Mucosa of descending colon (tissue), 3 donors: ENCODE measurements at regions of chr2 and their contacts with region 1.

Region 1: DNA sequence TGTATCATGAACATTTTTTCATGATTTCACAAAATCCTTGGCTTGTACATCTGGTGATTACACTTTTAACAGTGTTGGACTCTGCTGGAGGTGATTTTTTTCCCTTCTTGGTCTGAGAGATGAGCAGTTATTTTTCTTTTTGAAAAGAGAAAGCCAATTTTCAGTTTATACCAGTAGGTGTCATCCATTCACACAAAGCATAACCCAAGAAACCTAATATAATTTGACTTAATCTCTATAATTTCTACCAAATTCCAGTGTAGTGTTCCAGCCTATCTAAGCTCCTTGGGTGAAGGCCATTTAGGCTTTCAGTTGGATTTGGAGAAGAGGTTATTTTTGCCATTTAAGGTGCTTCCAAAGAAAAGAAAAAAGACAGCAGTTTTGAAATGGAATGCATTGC is 7.7 kb upstream of the ICOS start:
- DNase-seq: no peak
- ATAC-seq: no peak
- H3K4me3 ChIP-seq: no peak overlapping the region
- H3K4me1 ChIP-seq: no peaks in the 10 kb centered on the region
- CTCF ChIP-seq: no peak

Region 2: GRCh38 chr2:204177977-204178540 is 249.2 kb after region 1 on chr2:
- intact Hi-C with region 1: loop called in 1 of 2 experiments (anchors 5 kb)
- DNase-seq: peak in 2 of 3 donors; percentile 74 to 86
- ATAC-seq: peak; percentile 64
- H3K4me3 ChIP-seq: no peak overlapping the region
- H3K4me1 ChIP-seq: no peaks in the 10 kb centered on the region
- CTCF ChIP-seq: peak; percentile 63